CD8-positive, alpha-beta T cell (primary cell): ENCODE measurements at regions of chr6 and their contacts with region 1.

Region 1: GRCh38 chr6:158718461-158719046 is 68.7 kb downstream of the SYTL3 start:
- DNase-seq: peak in 1 of 9 experiments; percentile 37
- ATAC-seq: no peak
- H3K4me3 ChIP-seq: no peak overlapping the region
- H3K4me3 Mint-ChIP-seq: no peak overlapping the region
- H3K27ac ChIP-seq: peak overlapping the region in 1 of 2 experiments; percentile 84
- H3K27ac Mint-ChIP-seq: peak overlapping the region; percentile 96
- H3K4me1 ChIP-seq: peaks cover 44% of the 10 kb centered on the region
- H3K4me1 Mint-ChIP-seq: peaks cover 56% of the 10 kb centered on the region
- H3K27me3 ChIP-seq: no peaks in the 10 kb centered on the region
- H3K27me3 Mint-ChIP-seq: no peaks in the 10 kb centered on the region
- CTCF ChIP-seq: no peak

Region 2: DNA sequence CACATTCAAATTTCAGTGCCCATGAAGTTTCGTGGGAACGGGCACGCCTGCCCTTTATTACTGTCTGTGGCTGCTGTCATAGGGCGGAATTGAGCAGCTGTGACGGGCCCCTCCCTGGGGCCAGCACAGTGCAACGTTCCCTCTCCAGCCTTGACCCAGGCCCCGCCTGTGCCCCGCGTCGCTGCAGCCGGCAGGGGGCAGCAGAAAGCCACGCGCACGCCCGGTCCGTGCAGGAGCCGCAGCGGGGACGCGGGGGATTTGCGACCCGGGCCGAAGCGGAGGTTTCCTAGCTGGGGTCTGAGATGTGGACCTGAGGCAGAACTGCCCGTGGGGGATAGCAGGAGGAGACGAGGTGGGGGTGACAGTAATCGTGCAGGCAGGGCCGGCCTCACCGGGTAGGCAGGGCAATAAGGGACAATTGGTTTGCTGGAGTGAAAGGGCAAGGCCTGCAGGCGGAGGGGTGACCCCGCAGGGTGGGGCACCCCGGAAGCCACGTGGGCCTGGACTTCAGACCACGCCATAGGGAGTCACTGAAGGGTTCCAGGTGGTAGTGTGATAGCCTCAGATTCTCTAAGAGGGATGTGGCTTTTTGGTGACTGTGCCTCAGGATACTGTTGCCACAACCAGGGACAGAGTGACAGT is 14.3 kb before region 1 on chr6:
- CTCF ChIA-PET with region 1: interaction called, 12 read pairs
- POLR2A ChIA-PET with region 1: no interaction called
- intact Hi-C with region 1: no loop called
- DNase-seq: peak; percentile 66 to 89 (median 77)
- ATAC-seq: peak; percentile 97
- H3K4me3 ChIP-seq: peak overlapping the region; percentile 45 to 60
- H3K4me3 Mint-ChIP-seq: peak overlapping the region; percentile 81
- H3K27ac ChIP-seq: peak overlapping the region in 1 of 2 experiments; percentile 17
- H3K27ac Mint-ChIP-seq: peak overlapping the region; percentile 79
- H3K4me1 ChIP-seq: peaks cover 8% of the 10 kb centered on the region
- H3K4me1 Mint-ChIP-seq: peaks cover 9% of the 10 kb centered on the region
- H3K27me3 ChIP-seq: no peaks in the 10 kb centered on the region
- H3K27me3 Mint-ChIP-seq: no peaks in the 10 kb centered on the region
- CTCF ChIP-seq: peak; percentile 98

Region 3: DNA sequence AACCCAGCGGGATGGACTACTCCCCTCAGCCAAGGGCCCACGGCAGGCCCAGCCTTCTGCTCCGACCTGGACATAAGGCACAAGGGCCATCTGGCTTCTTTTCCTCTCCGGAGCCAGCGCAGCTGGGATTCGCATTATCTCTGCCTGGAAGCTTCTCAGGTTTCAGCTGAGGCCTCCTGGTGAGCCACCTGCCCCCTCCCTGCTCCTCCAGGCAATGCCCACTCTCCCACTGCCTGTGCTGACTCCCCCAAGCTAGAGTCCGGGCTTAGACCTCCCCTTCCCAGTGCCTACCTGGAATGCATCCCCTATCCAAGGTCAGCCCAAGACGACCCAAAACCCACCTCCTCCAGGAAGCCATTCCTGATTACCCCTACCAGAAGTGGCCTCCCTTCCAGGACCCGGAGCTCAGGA is 39.9 kb after region 1 on chr6:
- CTCF ChIA-PET with region 1: no interaction called
- POLR2A ChIA-PET with region 1: no interaction called
- intact Hi-C with region 1: loop called in 1 of 2 experiments (anchors 5 kb)
- DNase-seq: no peak
- ATAC-seq: no peak
- H3K4me3 ChIP-seq: no peak overlapping the region
- H3K4me3 Mint-ChIP-seq: no peak overlapping the region
- H3K27ac ChIP-seq: no peak overlapping the region
- H3K27ac Mint-ChIP-seq: no peak overlapping the region
- H3K4me1 ChIP-seq: no peaks in the 10 kb centered on the region
- H3K4me1 Mint-ChIP-seq: no peaks in the 10 kb centered on the region
- H3K27me3 ChIP-seq: no peaks in the 10 kb centered on the region
- H3K27me3 Mint-ChIP-seq: no peaks in the 10 kb centered on the region
- CTCF ChIP-seq: no peak

Region 4: DNA sequence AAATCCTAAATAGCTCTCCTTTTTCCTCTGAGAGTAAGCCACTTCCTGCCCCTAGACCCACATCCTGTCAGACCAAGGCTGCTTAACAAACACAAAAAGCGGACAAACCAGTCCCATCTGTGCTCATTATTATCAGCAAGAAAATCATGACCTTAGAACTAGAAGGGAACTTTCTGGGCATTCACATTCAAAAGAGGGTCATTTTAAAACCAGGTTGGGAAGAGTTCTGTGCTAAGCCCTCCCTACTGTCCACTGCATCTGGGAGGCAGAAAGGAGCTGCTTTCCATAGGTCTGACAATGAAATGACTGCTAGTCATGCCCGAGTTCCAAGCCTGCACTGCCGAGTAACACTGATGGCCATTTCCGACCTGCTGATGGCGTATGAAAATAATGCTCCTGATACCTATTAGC is 85.2 kb after region 1 on chr6:
- CTCF ChIA-PET with region 1: interaction called, 3 read pairs
- POLR2A ChIA-PET with region 1: no interaction called
- intact Hi-C with region 1: loop called in 1 of 2 experiments (anchors 5 kb)
- DNase-seq: peak in 7 of 9 experiments; percentile 33 to 79 (median 60)
- ATAC-seq: peak; percentile 48
- H3K4me3 ChIP-seq: peak overlapping the region; percentile 28 to 40
- H3K4me3 Mint-ChIP-seq: peak overlapping the region; percentile 73
- H3K27ac ChIP-seq: peak overlapping the region; percentile 25 to 79
- H3K27ac Mint-ChIP-seq: peak overlapping the region; percentile 86
- H3K4me1 ChIP-seq: peaks cover 90% of the 10 kb centered on the region
- H3K4me1 Mint-ChIP-seq: peaks cover 91% of the 10 kb centered on the region
- H3K27me3 ChIP-seq: no peaks in the 10 kb centered on the region
- H3K27me3 Mint-ChIP-seq: no peaks in the 10 kb centered on the region
- CTCF ChIP-seq: no peak

Region 5: DNA sequence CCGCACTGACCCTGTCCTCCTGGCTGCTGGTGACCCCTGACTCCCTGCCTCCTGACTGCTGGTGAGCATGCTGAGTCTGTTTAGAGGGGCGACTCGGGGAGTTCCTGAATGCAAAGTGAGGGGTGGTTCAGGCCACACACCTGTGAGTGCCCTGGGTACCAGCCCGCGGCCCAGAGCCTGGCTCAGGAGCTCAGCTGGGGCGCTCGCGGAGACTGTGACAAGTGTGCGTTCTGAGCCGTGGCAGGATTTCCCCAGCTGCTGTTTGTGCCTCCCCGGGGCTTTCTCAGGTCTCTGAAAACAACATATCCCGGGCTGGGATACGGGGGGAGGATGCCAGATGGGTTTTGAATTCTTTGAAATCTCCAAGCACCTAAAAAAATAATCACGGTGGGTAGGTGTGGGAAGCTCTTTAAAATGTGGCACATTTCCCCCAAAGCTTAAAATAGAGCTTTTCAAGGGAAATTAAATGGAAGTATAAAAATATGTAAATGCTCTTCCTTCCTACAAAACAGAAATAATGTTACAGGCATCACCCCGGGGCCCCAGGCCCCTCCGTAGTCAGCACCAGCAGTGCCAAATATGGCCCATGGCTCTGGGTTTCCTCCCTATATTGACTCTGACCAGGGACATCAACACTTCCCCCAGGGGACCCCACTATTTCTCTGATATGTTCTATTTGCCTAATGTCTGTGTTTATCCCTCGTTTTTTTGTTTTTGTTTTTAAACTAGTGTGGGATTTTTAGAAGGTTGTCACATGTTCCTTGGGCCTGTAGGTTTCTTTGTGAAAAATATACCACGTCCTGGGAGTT is 376.1 kb after region 1 on chr6:
- CTCF ChIA-PET with region 1: no interaction called
- POLR2A ChIA-PET with region 1: no interaction called
- intact Hi-C with region 1: no loop called
- DNase-seq: peak in 7 of 9 experiments; percentile 19 to 84 (median 49)
- ATAC-seq: peak; percentile 47
- H3K4me3 ChIP-seq: no peak overlapping the region
- H3K4me3 Mint-ChIP-seq: peak overlapping the region; percentile 40
- H3K27ac ChIP-seq: no peak overlapping the region
- H3K27ac Mint-ChIP-seq: peak overlapping the region; percentile 70
- H3K4me1 ChIP-seq: peaks cover 51% of the 10 kb centered on the region
- H3K4me1 Mint-ChIP-seq: peaks cover 51% of the 10 kb centered on the region
- H3K27me3 ChIP-seq: no peaks in the 10 kb centered on the region
- H3K27me3 Mint-ChIP-seq: no peaks in the 10 kb centered on the region
- CTCF ChIP-seq: no peak